ENCODE measurements at regions of chr1 and their contacts with region 1.

Region 1: DNA sequence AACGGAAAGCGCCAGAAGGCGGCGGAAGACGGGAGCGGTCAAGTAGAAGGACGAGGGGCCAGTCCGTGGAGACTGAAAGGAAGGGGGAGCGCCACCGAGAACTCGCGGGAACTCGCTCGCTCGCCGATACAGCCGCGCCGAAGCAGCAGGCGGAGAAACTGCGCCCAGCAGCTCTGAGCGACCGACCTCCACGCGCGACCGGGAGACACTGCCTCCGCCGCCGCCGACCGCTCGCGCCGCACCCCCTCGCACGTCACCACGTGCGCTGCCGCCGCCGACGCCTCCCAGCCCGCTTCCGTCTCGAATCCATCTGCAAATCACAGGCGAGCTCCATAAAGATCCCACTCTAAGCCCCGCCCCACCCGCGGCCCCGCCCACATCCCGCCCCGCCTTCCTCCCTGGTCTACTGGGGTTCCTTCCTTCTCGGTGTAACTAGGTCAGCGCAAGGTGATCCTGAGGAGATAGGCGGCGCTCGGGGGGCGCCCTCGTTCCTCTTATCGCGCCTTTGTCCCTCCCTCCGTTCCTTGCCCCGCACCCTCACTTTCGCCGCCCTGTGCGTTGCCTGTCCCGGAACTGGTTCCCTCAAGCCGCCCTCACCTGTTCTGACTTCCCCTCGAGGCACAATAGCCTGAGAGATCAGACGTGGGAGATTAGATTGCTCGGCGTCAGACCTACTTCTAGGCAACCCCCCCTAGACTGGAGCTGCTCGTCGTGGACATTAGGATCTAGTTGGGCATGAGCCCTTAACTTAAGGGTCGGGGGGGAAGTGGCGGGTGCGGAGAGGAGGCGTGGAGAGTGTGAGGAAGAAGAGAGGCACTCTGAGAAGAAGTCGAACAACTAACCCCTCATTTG is at the start of gene IVNS1ABP:
- DNase-seq: peak; percentile 94
- ATAC-seq: peak; percentile 82
- H3K4me3 Mint-ChIP-seq: peak within 1 kb of the TSS; percentile 96
- H3K27ac Mint-ChIP-seq: peak within 1 kb of the TSS; percentile 96
- H3K4me1 Mint-ChIP-seq: peaks cover 43% of the 10 kb centered on the region
- H3K27me3 Mint-ChIP-seq: no peaks in the 10 kb centered on the region
- total RNA-seq, gene IVNS1ABP: 261 to 265 TPM

Region 2: DNA sequence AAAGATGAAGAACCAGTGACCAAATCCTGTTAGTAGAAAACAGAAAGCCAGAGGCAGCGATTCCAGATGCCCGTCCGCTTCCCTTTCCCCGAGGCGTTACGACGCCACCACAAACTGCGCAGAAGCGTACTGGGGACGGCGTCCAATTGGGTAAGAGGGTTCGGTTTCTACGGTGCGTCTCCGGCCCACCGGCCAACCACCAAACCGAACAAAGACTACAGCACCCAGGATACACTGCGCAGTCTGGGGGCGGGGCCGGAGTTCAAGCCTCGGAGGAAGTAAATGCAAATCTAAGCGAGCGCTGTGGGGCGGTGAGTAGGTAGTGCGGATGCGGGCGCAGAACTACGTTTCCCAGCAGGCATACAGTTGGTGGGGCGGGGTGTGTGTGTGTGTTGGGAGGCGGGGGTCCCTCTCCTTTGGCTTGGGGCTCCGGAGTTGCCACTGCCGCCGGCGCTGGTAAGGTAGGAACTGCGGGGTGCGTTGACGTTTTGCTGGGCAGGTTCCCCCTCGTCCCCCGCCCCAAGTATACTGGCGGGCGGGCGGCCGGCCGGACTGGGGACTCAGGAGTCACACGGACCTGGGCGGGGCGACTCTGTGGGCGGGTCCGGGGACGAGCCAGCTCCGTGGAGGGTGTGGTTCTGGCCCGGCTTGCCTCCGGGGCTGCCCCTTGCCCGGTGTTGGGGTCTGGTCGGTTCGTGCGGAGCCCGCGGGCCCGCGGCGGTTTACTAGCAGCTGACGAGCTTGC is 160.2 kb before region 1 on chr1 and contains the starts of genes SWT1 and TRMT1L:
- POLR2A ChIA-PET with region 1: interaction called, 16 read pairs
- DNase-seq: peak; percentile 97
- ATAC-seq: peak; percentile 95
- H3K4me3 Mint-ChIP-seq: peak within 1 kb of the TSS; percentile 99
- H3K27ac Mint-ChIP-seq: peak within 1 kb of the TSS; percentile 100
- H3K4me1 Mint-ChIP-seq: peaks cover 43% of the 10 kb centered on the region
- H3K27me3 Mint-ChIP-seq: no peaks in the 10 kb centered on the region
- total RNA-seq, gene SWT1: 3.9 to 5.6 TPM
- total RNA-seq, gene TRMT1L: 22.0 to 22.9 TPM

Region 3: DNA sequence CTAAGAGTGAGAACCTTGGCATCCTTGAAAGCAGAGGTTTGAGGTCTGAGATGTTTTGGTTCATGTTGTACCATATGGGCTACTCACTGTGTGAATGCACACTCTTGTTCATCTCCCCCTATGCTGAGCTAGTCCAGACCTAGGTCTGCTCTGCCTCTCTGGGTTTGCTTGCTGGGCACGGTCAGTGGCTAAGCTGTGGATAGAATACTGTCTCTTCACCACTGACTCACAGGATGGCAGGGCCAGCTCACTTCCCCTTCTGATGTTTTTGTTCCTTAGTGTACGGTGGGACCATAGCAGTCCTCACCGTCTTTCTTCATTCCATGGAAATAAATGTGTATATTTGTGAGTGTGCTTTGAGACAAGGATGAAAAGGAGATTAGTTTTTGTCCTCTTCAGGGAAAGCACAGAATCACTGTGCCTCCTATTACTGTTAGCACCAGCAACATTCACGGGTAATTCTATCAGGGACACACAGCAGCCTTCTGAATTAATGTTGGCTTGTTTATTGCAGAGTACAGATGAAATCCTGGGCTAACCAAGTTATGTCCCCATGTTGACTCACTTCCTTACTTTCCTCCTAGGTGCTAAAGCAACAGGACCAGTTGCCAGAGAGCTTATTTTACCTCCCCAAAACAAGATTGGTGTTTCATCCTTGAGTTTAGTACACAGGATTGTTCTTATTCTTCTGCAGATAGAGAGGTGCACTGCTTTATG is 56.7 kb after region 1 on chr1:
- POLR2A ChIA-PET with region 1: interaction called, 10 read pairs
- DNase-seq: no peak
- ATAC-seq: peak; percentile 23
- H3K4me3 Mint-ChIP-seq: peak overlapping the region; percentile 18
- H3K27ac Mint-ChIP-seq: peak overlapping the region; percentile 76
- H3K4me1 Mint-ChIP-seq: peaks cover 21% of the 10 kb centered on the region
- H3K27me3 Mint-ChIP-seq: no peaks in the 10 kb centered on the region

Region 4: GRCh38 chr1:185439727-185440415 is 122.6 kb after region 1 on chr1:
- POLR2A ChIA-PET with region 1: interaction called, 68 read pairs
- DNase-seq: peak; percentile 45
- ATAC-seq: peak; percentile 87
- H3K4me3 Mint-ChIP-seq: no peak overlapping the region
- H3K27ac Mint-ChIP-seq: no peak overlapping the region
- H3K4me1 Mint-ChIP-seq: peaks cover 21% of the 10 kb centered on the region
- H3K27me3 Mint-ChIP-seq: no peaks in the 10 kb centered on the region

Region 5: GRCh38 chr1:185595835-185596667 is 278.8 kb after region 1 on chr1:
- POLR2A ChIA-PET with region 1: interaction called, 15 read pairs
- DNase-seq: no peak
- ATAC-seq: peak; percentile 52
- H3K4me3 Mint-ChIP-seq: no peak overlapping the region
- H3K27ac Mint-ChIP-seq: no peak overlapping the region
- H3K4me1 Mint-ChIP-seq: peaks cover 25% of the 10 kb centered on the region
- H3K27me3 Mint-ChIP-seq: no peaks in the 10 kb centered on the region

Region 6: GRCh38 chr1:185681034-185681633 is 363.9 kb after region 1 on chr1:
- POLR2A ChIA-PET with region 1: interaction called, 33 read pairs
- DNase-seq: no peak
- ATAC-seq: peak; percentile 61
- H3K4me3 Mint-ChIP-seq: no peak overlapping the region
- H3K27ac Mint-ChIP-seq: no peak overlapping the region
- H3K4me1 Mint-ChIP-seq: peaks cover 19% of the 10 kb centered on the region
- H3K27me3 Mint-ChIP-seq: no peaks in the 10 kb centered on the region